Activated CD4-positive, alpha-beta T cell treated with anti-CD3 and anti-CD28 coated beads, Interleukin-2, amount 10 ng/mL, durations not matched to agents 24 days and 14 days (primary cell): ENCODE measurements at regions of chr10 and their contacts with region 1.

Region 1: GRCh38 chr10:102835007-102835482 is 2.2 kb downstream of the CYP17A1 start:
- DNase-seq: peak; percentile 93
- H3K4me3 Mint-ChIP-seq: no peak overlapping the region
- H3K27ac Mint-ChIP-seq: no peak overlapping the region
- H3K4me1 Mint-ChIP-seq: peaks cover 5% of the 10 kb centered on the region
- H3K27me3 Mint-ChIP-seq: peaks cover 9% of the 10 kb centered on the region

Region 2: GRCh38 chr10:102461187-102462054 is 373.6 kb before region 1 on chr10:
- intact Hi-C with region 1: no loop called
- DNase-seq: peak; percentile 98
- H3K4me3 Mint-ChIP-seq: peak overlapping the region; percentile 88
- H3K27ac Mint-ChIP-seq: peak overlapping the region; percentile 88
- H3K4me1 Mint-ChIP-seq: peaks cover 28% of the 10 kb centered on the region
- H3K27me3 Mint-ChIP-seq: peaks cover 6% of the 10 kb centered on the region

Region 3: DNA sequence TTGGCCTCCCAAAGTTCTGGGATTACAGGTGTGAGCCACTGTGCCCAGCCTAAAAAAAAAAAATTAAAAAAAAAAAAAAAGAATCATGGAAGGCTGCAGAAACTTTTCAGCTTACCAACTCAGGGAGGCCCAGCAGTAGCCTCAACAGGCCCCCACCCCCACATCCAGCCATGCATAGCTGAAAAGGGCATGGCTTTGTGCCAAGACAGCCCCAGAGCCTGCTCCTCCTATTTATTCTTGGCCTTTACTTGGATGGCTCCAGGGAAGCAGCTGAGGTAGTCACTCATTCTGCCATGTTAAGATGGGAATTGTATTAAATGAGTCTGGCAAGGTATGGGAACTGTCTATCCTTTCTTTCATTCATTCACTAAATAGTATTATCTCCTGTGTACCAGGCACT is 69.3 kb after region 1 on chr10:
- intact Hi-C with region 1: loop called (anchors 1 kb)
- DNase-seq: no peak
- H3K4me3 Mint-ChIP-seq: no peak overlapping the region
- H3K27ac Mint-ChIP-seq: no peak overlapping the region
- H3K4me1 Mint-ChIP-seq: no peaks in the 10 kb centered on the region
- H3K27me3 Mint-ChIP-seq: no peaks in the 10 kb centered on the region

Region 4: DNA sequence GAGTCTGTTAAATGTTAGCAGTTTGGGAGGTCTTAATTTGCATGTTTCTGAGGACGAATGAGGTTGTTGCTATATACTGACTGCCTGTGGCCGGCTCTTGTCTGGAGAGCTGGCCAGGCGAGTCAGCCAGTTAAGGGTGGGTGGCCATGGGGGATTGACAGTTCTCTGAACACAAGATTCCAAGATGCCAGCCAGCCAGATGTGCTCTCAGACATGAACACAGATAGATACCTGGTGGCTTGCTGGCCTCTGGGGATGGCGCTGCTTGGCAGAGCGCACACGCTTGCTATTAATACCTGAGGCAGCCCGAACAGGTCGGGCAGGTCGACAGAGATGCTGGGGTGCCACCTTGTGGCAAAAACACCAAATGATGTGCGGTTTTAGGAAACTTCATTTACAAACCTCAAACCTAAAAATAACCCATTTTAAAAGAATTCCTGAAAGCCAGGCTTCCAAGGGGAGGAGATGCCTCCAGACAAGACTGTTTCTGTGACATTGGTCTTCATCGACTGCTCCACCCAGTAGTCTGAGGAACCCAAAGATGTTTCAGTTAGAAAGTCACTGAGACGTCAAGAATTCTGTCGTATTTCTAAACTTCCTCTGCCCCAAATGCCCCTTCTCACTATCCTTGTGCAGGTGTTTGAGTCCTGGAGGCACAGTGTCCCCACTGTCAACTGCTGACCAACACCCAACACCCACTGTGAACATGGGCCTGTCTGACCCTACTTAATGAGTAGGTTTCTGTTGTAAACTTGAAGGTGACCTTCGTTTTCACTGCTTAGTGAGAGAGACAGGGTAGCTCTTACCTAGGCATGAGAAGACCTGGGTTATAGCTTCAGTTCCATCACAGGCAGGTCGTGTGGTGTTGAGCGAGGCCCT is 234.6 kb after region 1 on chr10:
- intact Hi-C with region 1: loop called (anchors 1 kb)
- DNase-seq: peak; percentile 91
- H3K4me3 Mint-ChIP-seq: peak overlapping the region; percentile 35
- H3K27ac Mint-ChIP-seq: peak overlapping the region; percentile 75
- H3K4me1 Mint-ChIP-seq: peaks cover 28% of the 10 kb centered on the region
- H3K27me3 Mint-ChIP-seq: no peaks in the 10 kb centered on the region

Region 5: GRCh38 chr10:103244663-103245271 is 409.7 kb after region 1 on chr10:
- intact Hi-C with region 1: loop called (anchors 1 kb)
- DNase-seq: peak; percentile 89
- H3K4me3 Mint-ChIP-seq: no peak overlapping the region
- H3K27ac Mint-ChIP-seq: no peak overlapping the region
- H3K4me1 Mint-ChIP-seq: peaks cover 19% of the 10 kb centered on the region
- H3K27me3 Mint-ChIP-seq: peaks cover 18% of the 10 kb centered on the region

Region 6: DNA sequence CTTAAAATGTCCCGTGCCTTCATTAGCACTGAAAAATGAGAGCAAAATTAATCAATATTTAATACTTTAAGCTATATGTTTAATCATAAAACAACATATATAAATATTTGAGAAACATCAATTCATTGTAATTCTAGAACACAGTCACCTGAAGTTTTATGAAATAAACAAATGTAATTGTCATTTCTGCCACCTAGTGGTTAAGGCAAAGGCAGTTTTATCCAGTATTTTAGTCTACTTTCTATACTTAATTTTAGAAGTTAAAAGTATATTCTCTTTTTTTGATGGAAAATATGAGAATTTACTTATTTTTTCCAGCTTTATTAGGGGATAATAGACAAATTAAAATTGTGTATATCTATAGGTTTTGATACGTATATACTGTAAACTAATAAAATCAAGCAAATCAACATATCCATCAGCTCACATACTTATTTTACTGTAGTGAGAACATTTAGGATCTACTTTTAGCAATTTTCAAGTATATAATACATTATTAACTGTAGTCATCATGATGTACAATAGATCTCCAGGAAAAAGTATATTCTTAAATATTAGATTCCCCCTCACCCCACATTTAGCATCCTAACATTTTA is 499.0 kb after region 1 on chr10:
- intact Hi-C with region 1: loop called (anchors 10 kb)
- DNase-seq: no peak
- H3K4me3 Mint-ChIP-seq: no peak overlapping the region
- H3K27ac Mint-ChIP-seq: no peak overlapping the region
- H3K4me1 Mint-ChIP-seq: no peaks in the 10 kb centered on the region
- H3K27me3 Mint-ChIP-seq: no peaks in the 10 kb centered on the region

Region 7: GRCh38 chr10:103752680-103753248 is 917.7 kb after region 1 on chr10:
- intact Hi-C with region 1: no loop called
- DNase-seq: peak; percentile 68
- H3K4me3 Mint-ChIP-seq: no peak overlapping the region
- H3K27ac Mint-ChIP-seq: no peak overlapping the region
- H3K4me1 Mint-ChIP-seq: peaks cover 42% of the 10 kb centered on the region
- H3K27me3 Mint-ChIP-seq: peaks cover 21% of the 10 kb centered on the region